Esophagus squamous epithelium (tissue), 5 donors: ENCODE measurements at regions of chr3 and their contacts with region 1.

Region 1: GRCh38 chr3:134794950-134795745 is at the start of gene EPHB1:
- DNase-seq: no peak
- H3K4me3 ChIP-seq: peak within 1 kb of the TSS; percentile 30 to 66 (median 50)
- H3K27ac ChIP-seq: peak within 1 kb of the TSS in 2 of 4 donors; percentile 52 to 53
- H3K4me1 ChIP-seq: peaks cover 16 to 32% (median 16%) of the 10 kb centered on the region in 3 donors
- H3K27me3 ChIP-seq: peaks cover 4 to 69% (median 12%) of the 10 kb centered on the region in 4 donors
- CTCF ChIP-seq: peak; percentile 66 to 86 (median 80)
- POLR2A ChIP-seq: no peak
- total RNA-seq, gene EPHB1: 0.08 to 1.1 (median 0.72) TPM

Region 2: GRCh38 chr3:135503760-135504686 is 708.9 kb after region 1 on chr3:
- intact Hi-C with region 1: loop called (anchors 10 kb)
- DNase-seq: no peak
- H3K4me3 ChIP-seq: no peak overlapping the region
- H3K27ac ChIP-seq: no peak overlapping the region
- H3K4me1 ChIP-seq: peaks cover 0 to 6% (median 0%) of the 10 kb centered on the region in 3 donors
- H3K27me3 ChIP-seq: peaks cover 0 to 39% (median 0%) of the 10 kb centered on the region in 4 donors
- CTCF ChIP-seq: peak in 5 of 6 experiments; percentile 33 to 64 (median 44)
- POLR2A ChIP-seq: no peak